K562 (cell line): ENCODE measurements at regions of chr15 and their contacts with region 1.

Region 1: DNA sequence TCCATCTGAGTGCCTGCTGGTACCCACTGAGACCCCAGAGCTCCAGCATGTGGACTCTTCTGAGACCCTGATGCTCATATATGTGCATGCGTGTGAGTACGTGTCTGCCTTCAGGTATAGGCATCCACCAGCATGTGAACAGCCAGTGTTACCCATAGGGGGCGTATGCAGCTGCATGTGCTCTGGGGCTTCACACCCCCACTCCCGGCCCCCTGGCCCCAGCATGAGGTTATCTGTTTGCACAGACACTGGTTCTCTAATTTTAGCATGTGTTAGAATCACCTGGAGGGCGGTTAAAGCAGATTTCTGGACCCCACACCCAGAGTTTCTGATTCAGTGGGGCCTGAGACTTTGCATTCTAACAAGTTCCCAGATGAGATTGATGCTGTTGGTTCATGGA is 824 bp upstream of the CILP start:
- DNase-seq: peak; percentile 88 to 94 (median 90)
- ATAC-seq: peak; percentile 95
- H3K4me3 ChIP-seq: no peak overlapping the region
- H3K27ac ChIP-seq: no peak overlapping the region
- H3K4me1 ChIP-seq: peaks cover 17 to 24% of the 10 kb centered on the region in 2 experiments; a peak in 3 of 5 replicates
- H3K27me3 ChIP-seq: peaks cover 8 to 11% of the 10 kb centered on the region in 2 experiments; a peak in 4 of 5 replicates
- CTCF ChIP-seq: peak; percentile 89 to 92 (median 89)
- EP300 ChIP-seq: peak; percentile 75
- POLR2A ChIP-seq: no peak
- RAD21 ChIP-seq: peak; percentile 65 to 81

Region 2: DNA sequence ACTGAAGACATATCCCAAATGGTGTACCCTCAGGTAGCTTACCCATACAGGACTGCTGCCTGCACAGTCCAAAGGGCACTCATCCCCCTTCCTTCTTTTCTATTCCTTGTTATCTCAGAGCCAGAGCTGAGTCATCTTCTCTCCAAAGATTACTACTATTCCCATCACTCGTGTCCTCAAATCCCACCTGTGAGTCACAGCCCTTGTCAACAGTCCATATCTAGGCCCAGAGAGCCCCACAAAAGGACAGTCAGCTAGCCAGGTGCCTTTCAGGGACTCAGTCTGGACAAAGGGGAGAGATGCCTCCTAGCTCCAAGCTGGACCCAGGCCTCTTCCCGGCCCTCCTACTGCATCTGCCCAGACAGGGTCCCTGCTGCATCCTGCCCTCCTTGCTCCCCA is 63.6 kb after region 1 on chr15:
- CTCF ChIA-PET with region 1: interaction called, 8 read pairs
- POLR2A ChIA-PET with region 1: no interaction called
- in situ Hi-C with region 1: no loop called
- intact Hi-C with region 1: loop called (anchors 1 kb)
- DNase-seq: peak; percentile 37 to 48 (median 42)
- ATAC-seq: no peak; the same call in 2 of the 3 replicates
- H3K4me3 ChIP-seq: no peak overlapping the region
- H3K27ac ChIP-seq: no peak overlapping the region
- H3K4me1 ChIP-seq: peaks cover 4 to 11% of the 10 kb centered on the region in 2 experiments; a peak in 4 of 5 replicates
- H3K27me3 ChIP-seq: no peaks in the 10 kb centered on the region
- CTCF ChIP-seq: no peak
- EP300 ChIP-seq: peak; percentile 63
- POLR2A ChIP-seq: no peak
- RAD21 ChIP-seq: no peak

Region 3: GRCh38 chr15:65292938-65293518 is 80.9 kb after region 1 on chr15:
- CTCF ChIA-PET with region 1: interaction called, 3 read pairs
- POLR2A ChIA-PET with region 1: interaction called, 11 read pairs
- in situ Hi-C with region 1: no loop called
- intact Hi-C with region 1: loop called (anchors 1 kb)
- DNase-seq: no peak
- ATAC-seq: no peak
- H3K4me3 ChIP-seq: no peak overlapping the region
- H3K27ac ChIP-seq: no peak overlapping the region
- H3K4me1 ChIP-seq: peaks cover 7 to 15% of the 10 kb centered on the region in 2 experiments; a peak in 4 of 5 replicates
- H3K27me3 ChIP-seq: no peaks in the 10 kb centered on the region
- CTCF ChIP-seq: no peak
- EP300 ChIP-seq: no peak
- POLR2A ChIP-seq: no peak
- RAD21 ChIP-seq: no peak

Region 4: DNA sequence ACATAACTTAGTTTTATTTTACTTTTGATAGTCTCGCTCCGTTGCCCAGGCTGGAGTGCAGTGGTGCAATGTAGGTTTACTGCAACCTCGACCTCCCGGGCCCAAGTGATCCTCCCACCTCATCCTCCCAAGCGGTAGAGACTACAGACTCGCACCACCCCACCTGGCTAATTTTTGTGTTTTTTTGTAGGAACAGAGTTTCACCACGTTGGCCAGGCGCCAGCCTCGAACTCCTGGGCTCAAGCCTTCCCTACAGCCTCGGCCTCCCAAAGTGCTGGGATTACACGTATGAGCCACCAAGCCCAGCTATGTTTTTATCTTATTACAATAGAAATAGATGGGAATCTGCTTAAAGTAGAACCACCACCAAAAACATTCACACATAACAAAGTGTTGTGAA is 86.6 kb after region 1 on chr15:
- CTCF ChIA-PET with region 1: interaction called, 3 read pairs
- POLR2A ChIA-PET with region 1: interaction called, 54 read pairs
- in situ Hi-C with region 1: no loop called
- intact Hi-C with region 1: loop called (anchors 1 kb)
- DNase-seq: no peak
- ATAC-seq: no peak
- H3K4me3 ChIP-seq: no peak overlapping the region
- H3K27ac ChIP-seq: no peak overlapping the region
- H3K4me1 ChIP-seq: peaks cover 17% of the 10 kb centered on the region in 2 experiments; a peak in 4 of 5 replicates
- H3K27me3 ChIP-seq: no peaks in the 10 kb centered on the region
- CTCF ChIP-seq: no peak
- EP300 ChIP-seq: no peak
- POLR2A ChIP-seq: no peak
- RAD21 ChIP-seq: no peak